Panc1 (cell line): ENCODE measurements at regions of chr7 and their contacts with region 1.

Region 1: GRCh38 chr7:77912293-77912692 is 113.7 kb downstream of the PHTF2 start:
- DNase-seq: no peak
- ATAC-seq: no peak
- H3K4me3 ChIP-seq: no peak overlapping the region
- H3K27ac ChIP-seq: no peak overlapping the region
- H3K4me1 ChIP-seq: no peaks in the 10 kb centered on the region
- H3K27me3 ChIP-seq: no peaks in the 10 kb centered on the region
- CTCF ChIP-seq: no peak

Region 2: DNA sequence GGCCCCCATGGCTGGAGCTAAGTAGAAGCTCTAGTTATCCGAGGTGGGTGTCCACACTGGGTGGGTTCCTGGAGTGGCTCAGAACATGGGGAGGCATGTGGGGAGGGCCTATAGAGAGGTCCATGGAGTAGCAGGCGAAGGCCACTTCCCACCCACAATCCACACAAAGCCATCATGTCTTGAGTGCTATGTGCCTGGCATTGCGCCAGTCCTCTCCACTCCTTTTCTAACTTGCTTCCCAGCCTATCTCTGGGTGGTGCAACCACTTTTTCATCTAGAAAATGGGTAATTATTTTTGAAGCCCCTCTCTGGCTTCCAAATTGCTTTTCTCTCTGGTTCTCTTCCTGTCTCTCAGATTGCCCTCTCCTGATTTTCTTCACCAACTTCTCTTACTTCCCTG is 149.9 kb after region 1 on chr7:
- CTCF ChIA-PET with region 1: no interaction called
- POLR2A ChIA-PET with region 1: interaction called, 18 read pairs
- in situ Hi-C with region 1: no loop called
- intact Hi-C with region 1: no loop called
- DNase-seq: no peak
- ATAC-seq: no peak
- H3K4me3 ChIP-seq: no peak overlapping the region
- H3K27ac ChIP-seq: no peak overlapping the region
- H3K4me1 ChIP-seq: no peaks in the 10 kb centered on the region
- H3K27me3 ChIP-seq: peaks cover 6% of the 10 kb centered on the region; the same call in 1 of the 2 replicates
- CTCF ChIP-seq: no peak